Ovary (tissue), 10 donors: ENCODE measurements at regions of chr9 and their contacts with region 1.

Region 1: GRCh38 chr9:69672596-69673310 is 582 bp upstream of the APBA1 start:
- DNase-seq: peak; percentile 76 to 86 (median 84)
- H3K4me3 ChIP-seq: peak overlapping the region; percentile 62
- H3K27ac ChIP-seq: peak overlapping the region; percentile 8 to 68
- H3K4me1 ChIP-seq: peaks cover 3% of the 10 kb centered on the region
- H3K27me3 ChIP-seq: no peaks in the 10 kb centered on the region
- CTCF ChIP-seq: peak; percentile 79 to 80 (median 80)
- EP300 ChIP-seq: no peak
- POLR2A ChIP-seq: no peak

Region 2: GRCh38 chr9:69186841-69187611 is 485.7 kb before region 1 on chr9:
- intact Hi-C with region 1: no loop called
- DNase-seq: no peak
- H3K4me3 ChIP-seq: no peak overlapping the region
- H3K27ac ChIP-seq: peak overlapping the region in 1 of 2 donors; percentile 73
- H3K4me1 ChIP-seq: peaks cover 11% of the 10 kb centered on the region
- H3K27me3 ChIP-seq: no peaks in the 10 kb centered on the region
- CTCF ChIP-seq: no peak
- EP300 ChIP-seq: peak; percentile 39
- POLR2A ChIP-seq: no peak

Region 3: DNA sequence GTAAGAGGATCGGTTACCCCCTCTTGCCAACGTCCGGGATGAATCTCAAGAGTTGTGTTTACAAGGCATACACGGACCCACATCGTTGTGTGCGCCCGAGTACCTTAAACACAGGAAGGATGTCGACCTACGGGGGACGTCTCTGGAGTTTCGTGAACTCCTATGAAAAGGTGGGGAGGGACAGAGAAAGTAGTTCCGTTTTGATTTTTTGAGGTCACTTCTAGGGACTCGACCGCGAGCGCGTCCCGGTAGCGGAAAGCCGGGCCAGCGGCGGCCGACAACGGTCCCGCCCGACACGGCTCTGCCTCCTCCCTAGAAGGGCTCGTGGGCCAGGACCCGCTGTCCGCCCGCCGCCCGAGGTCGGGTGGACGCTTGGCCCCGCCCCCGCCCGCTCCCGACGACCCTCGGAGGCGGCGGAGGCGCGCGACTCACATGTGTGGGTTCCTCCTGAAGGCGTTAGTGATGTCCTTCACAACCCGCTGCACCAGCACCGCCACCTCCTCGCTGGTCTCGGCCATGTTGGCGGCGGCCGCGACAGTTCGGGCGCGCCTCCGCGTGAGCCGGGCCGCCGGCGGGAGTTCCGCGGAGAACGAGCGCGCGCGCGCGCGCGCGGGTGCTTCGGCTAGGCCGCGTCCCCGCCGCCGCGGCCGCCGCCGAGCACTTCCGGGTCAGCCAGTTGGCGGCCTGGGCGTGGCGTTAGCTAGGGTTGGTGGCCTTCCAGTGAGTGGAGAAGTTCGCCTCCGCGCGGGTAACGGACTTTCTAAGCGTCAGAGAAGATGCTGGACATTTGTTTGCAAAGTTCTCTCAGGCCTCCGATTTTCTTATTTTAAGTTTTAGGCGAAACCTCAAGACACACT is 86.9 kb after region 1 on chr9 and contains the start of gene PTAR1:
- intact Hi-C with region 1: loop called in 1 of 4 experiments (anchors 5 kb)
- DNase-seq: peak; percentile 89 to 95 (median 92)
- H3K4me3 ChIP-seq: peak within 1 kb of the TSS; percentile 68
- H3K27ac ChIP-seq: peak within 1 kb of the TSS; percentile 90
- H3K4me1 ChIP-seq: peaks cover 2% of the 10 kb centered on the region
- H3K27me3 ChIP-seq: no peaks in the 10 kb centered on the region
- CTCF ChIP-seq: peak in 1 of 3 donors; percentile 13
- EP300 ChIP-seq: no peak
- POLR2A ChIP-seq: peak; percentile 64
- total RNA-seq, gene PTAR1: 38.5 to 63.0 (median 49.5) TPM